GM10248 (cell line): ENCODE measurements at regions of chr15 and their contacts with region 1.

Region 1: DNA sequence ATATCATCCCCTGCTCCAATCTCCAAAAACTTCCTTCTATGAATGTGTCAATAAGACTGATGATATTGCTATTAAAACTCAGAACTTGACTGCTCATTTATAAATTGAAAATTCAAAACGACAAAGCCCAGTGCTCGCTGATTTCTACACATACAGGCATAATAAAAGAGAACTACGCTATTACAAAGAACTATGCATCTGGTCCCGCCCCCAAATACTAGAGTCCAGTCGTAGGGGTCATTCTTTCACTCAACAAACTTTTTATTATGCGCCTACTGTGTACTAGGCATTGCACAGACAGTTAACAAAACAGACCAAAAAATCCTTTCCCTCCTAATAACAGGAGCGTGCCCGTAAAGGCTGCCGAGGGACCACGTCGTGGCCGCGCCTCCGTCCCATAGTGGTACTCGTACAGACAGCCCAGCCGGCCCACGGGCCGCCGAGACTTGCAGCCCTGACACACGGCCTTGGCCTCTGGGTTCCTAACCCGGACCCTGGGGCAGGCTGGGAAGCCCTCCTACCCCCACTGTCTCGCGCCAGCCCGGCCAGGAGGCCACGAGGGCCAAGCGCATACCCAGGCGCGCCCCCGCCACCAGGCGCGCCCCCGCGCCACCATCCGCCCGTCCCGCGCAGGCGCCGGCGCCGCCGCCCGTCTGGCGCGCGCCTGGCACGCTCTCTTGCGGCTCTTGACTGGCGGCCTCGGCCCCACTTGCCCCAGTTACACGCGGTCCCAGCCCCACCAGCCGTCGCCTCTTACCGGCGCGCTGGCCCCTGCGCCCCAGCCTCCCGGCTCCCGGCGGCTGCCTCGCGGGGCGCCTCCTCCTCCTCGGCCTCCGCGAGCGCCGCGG is 757 bp downstream of the AVEN start:
- DNase-seq: peak; percentile 85
- CTCF ChIP-seq: no peak

Region 2: DNA sequence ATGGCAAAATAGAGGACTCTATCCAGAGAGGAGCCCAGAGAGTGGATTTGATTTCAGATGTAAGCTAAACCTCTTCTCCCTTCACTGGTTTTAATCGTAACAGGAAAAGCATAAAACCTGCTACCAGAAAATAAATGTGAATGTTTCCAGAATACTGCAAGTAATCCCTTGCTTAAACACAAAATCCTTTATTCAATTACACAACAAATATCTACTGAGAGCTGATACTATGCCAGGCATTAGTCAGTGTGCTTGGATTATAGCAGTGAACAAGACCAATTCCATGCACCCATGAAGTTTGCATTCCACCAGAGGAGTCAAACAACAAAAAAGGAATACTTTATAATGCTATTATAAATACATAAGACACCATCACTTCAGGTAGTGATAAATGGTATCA is 14.3 kb before region 1 on chr15:
- CTCF ChIA-PET with region 1: no interaction called
- POLR2A ChIA-PET with region 1: no interaction called
- DNase-seq: no peak
- CTCF ChIP-seq: no peak

Region 3: GRCh38 chr15:34055853-34056595 is 17.8 kb after region 1 on chr15:
- CTCF ChIA-PET with region 1: interaction called, 19 read pairs
- POLR2A ChIA-PET with region 1: no interaction called
- DNase-seq: no peak
- CTCF ChIP-seq: no peak

Region 4: GRCh38 chr15:34327906-34328305 is 289.7 kb after region 1 on chr15:
- CTCF ChIA-PET with region 1: no interaction called
- POLR2A ChIA-PET with region 1: no interaction called
- DNase-seq: no peak
- CTCF ChIP-seq: no peak